ENCODE measurements at regions of chr12 and their contacts with region 1.

Region 1: DNA sequence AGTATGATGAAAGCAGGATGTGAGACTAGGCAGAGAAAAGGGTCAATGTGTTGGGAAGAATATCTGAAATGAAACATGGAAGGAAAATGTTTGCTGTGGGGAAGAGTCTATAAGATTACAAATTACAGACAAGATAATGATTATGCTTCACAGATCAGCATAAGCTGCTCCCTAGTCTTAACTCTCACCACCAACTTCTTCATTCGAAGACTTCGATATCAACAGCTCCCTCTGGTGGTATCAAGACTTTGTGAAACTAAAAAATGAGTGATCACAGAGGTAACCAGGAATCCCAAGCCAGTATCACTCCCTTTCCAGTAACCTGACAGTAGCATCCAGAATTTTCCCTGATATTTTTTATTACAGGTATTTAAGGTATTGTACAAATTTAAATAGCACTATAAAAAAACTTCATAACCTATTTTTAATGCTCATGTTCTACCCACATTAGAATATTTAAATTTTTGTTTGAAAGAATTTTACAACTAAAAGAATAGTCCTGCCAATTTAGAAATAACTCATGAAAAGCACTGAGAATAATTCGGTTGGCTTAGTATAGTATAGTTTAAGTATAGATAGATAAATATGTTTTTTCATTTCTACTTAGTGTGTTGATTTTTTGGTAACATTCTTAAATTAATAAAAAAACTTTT is 84.4 kb downstream of the C2CD5 start:
- DNase-seq: no peak
- H3K4me3 Mint-ChIP-seq: no peak overlapping the region
- H3K27ac Mint-ChIP-seq: no peak overlapping the region
- H3K4me1 Mint-ChIP-seq: no peaks in the 10 kb centered on the region
- H3K27me3 Mint-ChIP-seq: no peaks in the 10 kb centered on the region

Region 2: GRCh38 chr12:22312336-22312735 is 147.6 kb before region 1 on chr12:
- CTCF ChIA-PET with region 1: no interaction called
- POLR2A ChIA-PET with region 1: no interaction called
- DNase-seq: no peak
- H3K4me3 Mint-ChIP-seq: no peak overlapping the region
- H3K27ac Mint-ChIP-seq: no peak overlapping the region
- H3K4me1 Mint-ChIP-seq: no peaks in the 10 kb centered on the region
- H3K27me3 Mint-ChIP-seq: no peaks in the 10 kb centered on the region

Region 3: GRCh38 chr12:22443379-22444316 is 16.3 kb before region 1 on chr12:
- CTCF ChIA-PET with region 1: interaction called, 15 read pairs
- POLR2A ChIA-PET with region 1: no interaction called
- DNase-seq: peak; percentile 60
- H3K4me3 Mint-ChIP-seq: no peak overlapping the region
- H3K27ac Mint-ChIP-seq: no peak overlapping the region
- H3K4me1 Mint-ChIP-seq: peaks cover 4% of the 10 kb centered on the region
- H3K27me3 Mint-ChIP-seq: peaks cover 2% of the 10 kb centered on the region

Region 4: DNA sequence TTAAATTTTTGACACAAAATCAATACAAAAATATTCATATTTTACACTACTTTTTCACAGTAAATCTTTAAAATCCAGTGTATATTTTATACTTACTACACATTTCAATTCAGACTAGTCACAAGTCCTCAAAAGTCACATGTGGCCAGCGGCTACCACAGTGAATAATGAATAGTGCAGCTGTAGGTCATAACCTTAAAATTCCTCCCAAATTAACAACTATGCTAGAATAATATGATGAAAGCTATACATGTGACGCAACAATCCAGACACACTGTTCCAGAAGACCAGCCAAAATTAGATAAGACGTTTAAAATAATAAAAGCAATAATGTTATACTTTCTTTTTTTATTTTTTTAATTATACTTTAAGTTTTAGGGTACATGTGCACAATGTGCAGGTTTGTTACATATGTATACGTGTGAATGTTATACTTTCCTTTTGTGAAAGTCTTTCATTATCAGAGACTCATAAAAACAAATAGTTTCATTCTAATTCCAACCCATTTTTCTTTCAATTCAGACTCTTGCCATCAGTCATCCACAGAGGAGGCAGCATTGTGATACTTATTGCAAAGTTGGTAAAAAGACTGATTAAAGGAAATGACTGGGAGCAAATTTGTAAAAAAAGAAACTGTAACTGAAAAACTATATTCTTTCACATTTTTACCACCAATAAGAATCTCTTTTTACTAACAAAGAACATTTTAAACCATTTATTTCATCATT is 17.4 kb after region 1 on chr12:
- CTCF ChIA-PET with region 1: interaction called, 14 read pairs
- POLR2A ChIA-PET with region 1: no interaction called
- DNase-seq: no peak
- H3K4me3 Mint-ChIP-seq: no peak overlapping the region
- H3K27ac Mint-ChIP-seq: peak overlapping the region; percentile 16
- H3K4me1 Mint-ChIP-seq: peaks cover 25% of the 10 kb centered on the region
- H3K27me3 Mint-ChIP-seq: no peaks in the 10 kb centered on the region

Measured in activated CD4-positive, alpha-beta memory T cell treated with anti-CD3 and anti-CD28 coated beads, Interleukin-2, amount 10 ng/mL, durations not matched to agents 7 days and 5 days (primary cell).